Endothelial cell of umbilical vein (primary cell): ENCODE measurements at regions of chr18 and their contacts with region 1.

Region 1: DNA sequence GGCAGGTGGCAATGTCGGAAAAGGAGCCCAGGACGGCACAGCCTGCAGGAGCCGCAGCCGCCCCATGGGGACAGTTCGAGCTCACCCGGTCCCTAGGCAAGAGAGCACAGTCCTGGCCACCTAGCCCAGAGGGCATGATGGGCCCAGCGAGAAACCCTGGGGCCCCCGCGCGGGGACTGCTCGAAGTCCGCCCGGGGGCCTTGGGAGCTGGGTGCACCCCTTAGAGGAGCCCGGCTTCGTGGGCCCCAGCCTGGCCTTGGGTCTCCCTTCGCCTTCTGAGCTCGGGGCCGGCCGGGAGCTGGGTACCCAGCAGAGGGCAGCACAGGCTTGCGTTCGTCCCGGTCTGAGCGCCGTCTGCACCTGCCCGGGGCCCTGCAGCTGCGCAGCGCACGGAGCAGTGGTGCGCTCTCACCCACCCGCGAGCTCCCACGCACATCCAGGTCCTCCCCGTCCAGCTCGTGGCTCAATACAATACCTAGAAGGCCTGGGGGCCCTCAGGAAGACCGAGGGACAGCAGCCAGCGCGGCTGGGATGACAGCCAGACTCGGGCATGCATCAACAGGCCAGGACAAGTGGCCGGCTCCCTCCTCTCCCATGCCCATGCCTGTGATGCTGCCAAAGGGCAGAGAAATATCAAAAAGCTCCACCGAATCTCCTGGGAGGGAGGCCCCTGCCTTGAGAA is 96.2 kb upstream of the ZNF532 start:
- DNase-seq: peak; percentile 58
- H3K4me3 ChIP-seq: no peak overlapping the region
- H3K27ac ChIP-seq: no peak overlapping the region
- H3K4me1 ChIP-seq: peaks cover 2% of the 10 kb centered on the region
- H3K27me3 ChIP-seq: peaks cover 7 to 25% of the 10 kb centered on the region in 2 experiments
- CTCF ChIP-seq: peak; percentile 86 to 99
- POLR2A ChIP-seq: no peak

Region 2: GRCh38 chr18:58493516-58494253 is 274.7 kb before region 1 on chr18:
- CTCF ChIA-PET with region 1: interaction called, 77 read pairs
- POLR2A ChIA-PET with region 1: no interaction called
- dilution Hi-C with region 1: no loop called
- intact Hi-C with region 1: loop called (anchors 1 kb)
- DNase-seq: peak; percentile 61
- H3K4me3 ChIP-seq: no peak overlapping the region
- H3K27ac ChIP-seq: no peak overlapping the region
- H3K4me1 ChIP-seq: peaks cover 3% of the 10 kb centered on the region
- H3K27me3 ChIP-seq: peaks cover 14 to 20% of the 10 kb centered on the region in 2 experiments
- CTCF ChIP-seq: peak; percentile 84
- POLR2A ChIP-seq: no peak

Region 3: GRCh38 chr18:58541789-58542425 is 226.5 kb before region 1 on chr18:
- CTCF ChIA-PET with region 1: interaction called, 85 read pairs
- POLR2A ChIA-PET with region 1: no interaction called
- dilution Hi-C with region 1: loop called (anchors 25 kb)
- intact Hi-C with region 1: no loop called
- DNase-seq: peak; percentile 13
- H3K4me3 ChIP-seq: no peak overlapping the region
- H3K27ac ChIP-seq: no peak overlapping the region
- H3K4me1 ChIP-seq: peaks cover 3% of the 10 kb centered on the region
- H3K27me3 ChIP-seq: peaks cover 0 to 3% of the 10 kb centered on the region in 2 experiments
- CTCF ChIP-seq: no peak
- POLR2A ChIP-seq: no peak

Region 4: GRCh38 chr18:58671111-58671631 is 97.3 kb before region 1 on chr18 and contains the start of gene MALT1:
- CTCF ChIA-PET with region 1: interaction called, 15 read pairs
- POLR2A ChIA-PET with region 1: no interaction called
- dilution Hi-C with region 1: no loop called
- intact Hi-C with region 1: loop called (anchors 5 kb)
- DNase-seq: peak; percentile 85
- H3K4me3 ChIP-seq: peak within 1 kb of the TSS; percentile 60 to 72 (median 64)
- H3K27ac ChIP-seq: peak within 1 kb of the TSS; percentile 36
- H3K4me1 ChIP-seq: peaks cover 25% of the 10 kb centered on the region
- H3K27me3 ChIP-seq: peaks cover 5% of the 10 kb centered on the region in 2 experiments
- CTCF ChIP-seq: no peak
- POLR2A ChIP-seq: peak; percentile 50
- total RNA-seq, gene MALT1: 5.1 and 8.8 TPM in 2 replicates

Region 5: DNA sequence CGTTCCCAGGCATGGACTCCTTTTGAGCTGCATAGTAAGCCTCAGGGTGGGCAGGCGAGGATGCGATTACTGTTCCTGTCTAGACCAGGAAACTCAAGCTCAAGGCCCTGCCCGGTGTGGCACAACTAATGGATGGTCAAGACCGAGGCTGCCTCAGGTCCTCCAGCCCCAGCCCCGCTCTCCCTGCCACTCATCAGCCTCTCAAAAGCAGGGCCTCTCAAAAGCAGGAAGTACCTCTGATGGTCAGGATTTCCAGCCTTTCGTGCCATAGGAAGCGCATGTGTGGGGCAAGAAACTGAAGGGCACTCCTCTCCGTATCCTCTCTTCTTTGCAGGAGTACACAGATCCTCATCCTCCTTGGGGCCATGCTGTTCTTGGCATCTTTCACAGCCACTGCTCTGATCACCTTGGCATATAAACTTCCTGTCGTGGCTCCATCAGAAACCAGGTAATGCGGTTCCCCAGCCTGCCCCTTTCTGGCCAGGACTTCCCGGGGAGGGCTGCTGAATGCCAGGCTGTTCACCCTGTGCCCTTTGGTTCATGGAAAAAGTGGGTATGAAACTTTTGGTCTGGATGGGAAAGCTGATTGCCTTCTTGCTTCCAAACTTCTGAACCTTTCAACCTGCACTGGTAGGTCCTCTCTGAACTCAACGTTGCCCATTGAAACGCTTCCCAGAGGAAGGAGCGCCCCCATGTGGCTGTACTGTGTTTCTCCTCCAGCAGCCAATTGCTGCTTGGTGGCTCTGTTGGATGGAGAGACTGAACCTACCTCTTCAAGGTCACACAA is 288.5 kb after region 1 on chr18:
- CTCF ChIA-PET with region 1: interaction called, 994 read pairs
- POLR2A ChIA-PET with region 1: no interaction called
- dilution Hi-C with region 1: no loop called
- intact Hi-C with region 1: loop called (anchors 1 kb)
- DNase-seq: peak; percentile 76
- H3K4me3 ChIP-seq: no peak overlapping the region
- H3K27ac ChIP-seq: no peak overlapping the region
- H3K4me1 ChIP-seq: no peaks in the 10 kb centered on the region
- H3K27me3 ChIP-seq: peaks cover 0 to 3% of the 10 kb centered on the region in 2 experiments
- CTCF ChIP-seq: peak; percentile 77 to 87
- POLR2A ChIP-seq: no peak

Region 6: DNA sequence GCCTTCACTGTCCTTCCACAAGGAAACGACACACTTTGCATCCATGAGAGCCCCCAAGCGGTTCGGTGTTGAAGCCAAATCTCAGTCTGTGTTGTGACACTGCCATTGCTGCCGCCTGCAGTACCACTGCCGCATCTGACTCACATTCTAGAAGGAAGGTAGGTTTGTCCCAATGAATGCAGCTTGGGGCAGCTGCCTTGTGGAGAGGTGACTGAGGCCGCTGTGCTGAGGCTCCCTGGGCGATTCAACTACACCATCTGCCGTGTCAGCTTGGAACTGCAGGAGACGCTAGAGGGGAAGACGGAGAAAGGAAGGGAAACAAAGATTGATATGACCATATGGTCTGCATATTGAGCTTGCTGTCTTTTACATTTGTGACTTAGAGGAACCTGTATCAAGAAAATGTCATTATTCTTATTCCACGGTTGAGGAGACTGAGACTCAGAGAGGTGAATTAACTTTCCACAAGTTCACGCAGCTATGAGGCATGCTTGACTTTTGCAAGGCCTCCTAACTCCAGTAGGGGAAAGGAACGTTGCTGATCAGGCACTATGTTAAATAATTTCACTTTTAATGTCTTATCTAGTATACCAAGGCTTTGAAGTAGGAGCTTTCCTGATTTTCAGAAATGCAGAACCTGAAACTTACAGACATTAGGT is 634.1 kb after region 1 on chr18:
- CTCF ChIA-PET with region 1: interaction called, 14 read pairs
- POLR2A ChIA-PET with region 1: no interaction called
- dilution Hi-C with region 1: no loop called
- intact Hi-C with region 1: loop called (anchors 2 kb)
- DNase-seq: peak; percentile 73
- H3K4me3 ChIP-seq: no peak overlapping the region
- H3K27ac ChIP-seq: no peak overlapping the region
- H3K4me1 ChIP-seq: no peaks in the 10 kb centered on the region
- H3K27me3 ChIP-seq: peaks cover 0 to 1% of the 10 kb centered on the region in 2 experiments
- CTCF ChIP-seq: peak; percentile 84 to 92
- POLR2A ChIP-seq: no peak